ENCODE measurements at regions of chr1 and their contacts with region 1.

Region 1: DNA sequence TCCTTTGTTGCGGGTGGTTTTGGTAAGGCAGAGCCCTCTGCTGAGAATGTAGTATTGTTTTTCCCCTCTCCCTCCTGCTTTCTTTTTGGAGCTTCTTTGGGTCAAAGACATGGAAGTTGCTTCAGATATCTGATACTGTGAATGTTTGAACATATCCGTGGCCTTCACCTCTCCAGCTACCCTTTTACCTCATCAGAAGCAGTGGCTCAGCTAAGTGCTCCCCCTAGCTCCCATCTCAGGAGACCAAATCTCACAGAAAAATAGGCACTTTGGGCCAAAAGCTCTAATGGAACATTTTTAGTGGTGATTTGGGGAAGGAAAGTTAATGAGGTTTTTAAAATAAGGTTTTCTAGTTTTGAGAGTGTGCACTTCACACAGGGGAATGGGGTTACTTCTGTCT is 6.3 kb downstream of the TMEM200B start:
- DNase-seq: no peak
- H3K4me3 ChIP-seq: no peak overlapping the region
- CTCF ChIP-seq: no peak

Region 2: GRCh38 chr1:28703629-28704028 is 413.8 kb before region 1 on chr1:
- CTCF ChIA-PET with region 1: no interaction called
- POLR2A ChIA-PET with region 1: no interaction called
- DNase-seq: no peak
- H3K4me3 ChIP-seq: no peak overlapping the region
- CTCF ChIP-seq: no peak

Region 3: DNA sequence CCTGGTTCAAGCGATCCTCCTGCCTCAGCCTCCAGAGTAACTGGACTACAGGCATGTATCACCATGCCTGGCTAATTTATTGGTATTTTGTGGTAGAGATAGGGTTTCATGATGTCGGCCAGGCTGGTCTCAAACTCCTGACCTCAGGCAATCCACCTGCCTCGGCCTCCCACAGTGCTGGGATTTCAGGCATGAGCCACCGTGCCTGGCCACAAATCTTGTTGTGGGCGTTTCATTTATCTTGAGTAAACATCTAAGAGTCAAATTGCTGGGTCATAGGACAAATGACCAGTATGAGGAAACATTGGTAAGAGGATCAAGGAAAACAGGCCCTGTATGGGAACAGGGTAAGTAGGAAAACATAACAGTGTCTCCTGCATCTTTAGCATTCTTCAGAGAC is 11.5 kb before region 1 on chr1:
- CTCF ChIA-PET with region 1: interaction called, 10 read pairs
- POLR2A ChIA-PET with region 1: no interaction called
- DNase-seq: no peak
- H3K4me3 ChIP-seq: no peak overlapping the region
- CTCF ChIP-seq: no peak